H1 (cell line): ENCODE measurements at regions of chr12 and their contacts with region 1.

Region 1: GRCh38 chr12:57058454-57058853 is 8.5 kb upstream of the MYO1A start:
- DNase-seq: no peak
- H3K4me3 ChIP-seq: no peak overlapping the region
- H3K27ac ChIP-seq: no peak overlapping the region
- H3K4me1 ChIP-seq: no peaks in the 10 kb centered on the region
- H3K27me3 ChIP-seq: no peaks in the 10 kb centered on the region
- CTCF ChIP-seq: no peak
- EP300 ChIP-seq: no peak
- POLR2A ChIP-seq: no peak
- RAD21 ChIP-seq: no peak

Region 2: GRCh38 chr12:57012600-57013465 is 45.6 kb before region 1 on chr12:
- CTCF ChIA-PET with region 1: interaction called, 60 read pairs
- POLR2A ChIA-PET with region 1: interaction called, 4 read pairs
- DNase-seq: no peak
- H3K4me3 ChIP-seq: no peak overlapping the region
- H3K27ac ChIP-seq: no peak overlapping the region
- H3K4me1 ChIP-seq: peaks cover 6 to 20% (median 15%) of the 10 kb centered on the region in 4 experiments
- H3K27me3 ChIP-seq: no peaks in the 10 kb centered on the region
- CTCF ChIP-seq: peak; percentile 41 to 59 (median 46)
- EP300 ChIP-seq: no peak
- POLR2A ChIP-seq: no peak
- RAD21 ChIP-seq: peak; percentile 60 to 62

Region 3: GRCh38 chr12:57046947-57047890 is 11.2 kb before region 1 on chr12:
- CTCF ChIA-PET with region 1: interaction called, 77 read pairs
- POLR2A ChIA-PET with region 1: interaction called, 11 read pairs
- DNase-seq: no peak
- H3K4me3 ChIP-seq: no peak overlapping the region
- H3K27ac ChIP-seq: no peak overlapping the region
- H3K4me1 ChIP-seq: no peaks in the 10 kb centered on the region
- H3K27me3 ChIP-seq: no peaks in the 10 kb centered on the region
- CTCF ChIP-seq: no peak
- EP300 ChIP-seq: no peak
- POLR2A ChIP-seq: no peak
- RAD21 ChIP-seq: no peak